ENCODE measurements at regions of chr16 and their contacts with region 1.

Region 1: GRCh38 chr16:20799599-20799998 is 6.7 kb downstream of the ERI2 start:
- DNase-seq: no peak
- H3K4me3 ChIP-seq: no peak overlapping the region
- H3K4me3 Mint-ChIP-seq: no peak overlapping the region
- H3K27ac Mint-ChIP-seq: no peak overlapping the region
- H3K4me1 ChIP-seq: no peaks in the 10 kb centered on the region
- H3K4me1 Mint-ChIP-seq: no peaks in the 10 kb centered on the region
- H3K27me3 ChIP-seq: no peaks in the 10 kb centered on the region
- H3K27me3 Mint-ChIP-seq: no peaks in the 10 kb centered on the region
- CTCF ChIP-seq: peak in 1 of 2 experiments; percentile 35

Region 2: GRCh38 chr16:20637247-20637646 is 162.4 kb before region 1 on chr16:
- CTCF ChIA-PET with region 1: no interaction called
- POLR2A ChIA-PET with region 1: no interaction called
- intact Hi-C with region 1: no loop called
- DNase-seq: no peak
- H3K4me3 ChIP-seq: no peak overlapping the region
- H3K4me3 Mint-ChIP-seq: no peak overlapping the region
- H3K27ac Mint-ChIP-seq: no peak overlapping the region
- H3K4me1 ChIP-seq: no peaks in the 10 kb centered on the region
- H3K4me1 Mint-ChIP-seq: no peaks in the 10 kb centered on the region
- H3K27me3 ChIP-seq: no peaks in the 10 kb centered on the region
- H3K27me3 Mint-ChIP-seq: no peaks in the 10 kb centered on the region
- CTCF ChIP-seq: no peak

Region 3: GRCh38 chr16:20711277-20711911 is 88.2 kb before region 1 on chr16:
- CTCF ChIA-PET with region 1: no interaction called
- POLR2A ChIA-PET with region 1: no interaction called
- intact Hi-C with region 1: no loop called
- DNase-seq: no peak
- H3K4me3 ChIP-seq: no peak overlapping the region
- H3K4me3 Mint-ChIP-seq: no peak overlapping the region
- H3K27ac Mint-ChIP-seq: no peak overlapping the region
- H3K4me1 ChIP-seq: no peaks in the 10 kb centered on the region
- H3K4me1 Mint-ChIP-seq: no peaks in the 10 kb centered on the region
- H3K27me3 ChIP-seq: no peaks in the 10 kb centered on the region
- H3K27me3 Mint-ChIP-seq: peaks cover 8% of the 10 kb centered on the region
- CTCF ChIP-seq: no peak

Region 4: DNA sequence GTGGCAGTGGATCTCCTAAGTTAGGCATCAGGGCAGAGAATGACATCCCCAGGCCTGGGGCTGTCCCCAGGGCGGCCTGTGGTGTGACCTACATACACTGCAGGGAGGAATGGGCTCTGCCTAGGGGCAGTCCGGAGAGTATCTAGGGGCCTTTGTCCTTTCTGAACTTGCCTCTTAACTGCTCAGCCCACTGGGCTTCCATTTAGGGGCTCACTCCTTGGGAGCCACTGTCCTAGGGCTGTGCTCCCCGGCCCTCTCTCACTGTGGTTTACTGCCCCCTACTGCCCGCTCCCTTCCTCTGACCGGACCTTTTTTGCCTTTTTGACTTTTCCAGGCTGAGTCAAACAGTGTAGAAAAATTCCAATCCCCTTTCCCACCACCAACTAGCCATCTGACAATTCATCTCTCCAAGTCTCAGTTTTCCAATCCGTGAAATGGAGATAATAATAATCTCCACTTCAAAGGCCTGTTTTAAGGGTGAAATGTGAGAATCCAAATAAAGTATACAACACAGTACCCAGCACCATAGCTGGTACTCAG is 284.2 kb after region 1 on chr16:
- CTCF ChIA-PET with region 1: interaction called, 3 read pairs
- POLR2A ChIA-PET with region 1: no interaction called
- intact Hi-C with region 1: loop called (anchors 1 kb)
- DNase-seq: peak; percentile 50 to 73
- H3K4me3 ChIP-seq: no peak overlapping the region
- H3K4me3 Mint-ChIP-seq: no peak overlapping the region
- H3K27ac Mint-ChIP-seq: no peak overlapping the region
- H3K4me1 ChIP-seq: no peaks in the 10 kb centered on the region
- H3K4me1 Mint-ChIP-seq: no peaks in the 10 kb centered on the region
- H3K27me3 ChIP-seq: no peaks in the 10 kb centered on the region
- H3K27me3 Mint-ChIP-seq: no peaks in the 10 kb centered on the region
- CTCF ChIP-seq: peak; percentile 61 to 64